ENCODE measurements at regions of chr2 and their contacts with region 1.

Region 1: GRCh38 chr2:149587220-149587949 is at the start of gene MMADHC:
- DNase-seq: peak; percentile 97
- ATAC-seq: peak; percentile 96
- H3K4me3 ChIP-seq: peak within 1 kb of the TSS; percentile 83 to 88 (median 83)
- H3K27ac ChIP-seq: peak within 1 kb of the TSS; percentile 97
- H3K4me1 ChIP-seq: peaks cover 47% of the 10 kb centered on the region
- H3K27me3 ChIP-seq: no peaks in the 10 kb centered on the region; a peak in 1 of 5 replicates
- CTCF ChIP-seq: no peak
- EP300 ChIP-seq: peak; percentile 19 to 37; a peak in 1 of 4 replicates
- POLR2A ChIP-seq: peak; percentile 88 to 95
- RAD21 ChIP-seq: peak; percentile 28; the same call in 1 of the 2 replicates
- total RNA-seq, gene MMADHC: 210 and 304 TPM in 2 replicates

Region 2: DNA sequence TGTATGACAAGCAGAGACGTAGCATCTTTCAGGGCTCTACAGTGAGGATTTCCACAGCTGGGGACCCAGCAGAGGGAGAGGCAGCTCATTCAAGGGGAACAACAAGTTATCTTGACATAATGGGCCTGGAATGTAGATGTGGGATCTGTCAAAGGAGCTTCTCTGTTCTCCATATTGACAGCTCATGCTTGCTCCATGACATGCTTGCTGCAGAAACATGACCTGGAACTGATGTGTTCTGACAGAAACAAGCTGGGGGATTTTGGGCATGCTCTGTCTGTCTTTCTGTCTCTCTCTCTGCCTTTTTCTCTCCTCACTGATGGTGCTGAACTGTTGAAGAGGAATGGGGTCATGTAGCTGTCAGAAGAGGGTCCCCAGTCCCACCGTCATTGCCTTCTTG is 79.4 kb before region 1 on chr2:
- CTCF ChIA-PET with region 1: no interaction called
- POLR2A ChIA-PET with region 1: no interaction called
- in situ Hi-C with region 1: no loop called
- intact Hi-C with region 1: no loop called
- DNase-seq: no peak
- ATAC-seq: no peak
- H3K4me3 ChIP-seq: no peak overlapping the region
- H3K27ac ChIP-seq: no peak overlapping the region
- H3K4me1 ChIP-seq: no peaks in the 10 kb centered on the region
- H3K27me3 ChIP-seq: no peaks in the 10 kb centered on the region
- CTCF ChIP-seq: no peak
- EP300 ChIP-seq: no peak
- POLR2A ChIP-seq: no peak
- RAD21 ChIP-seq: no peak

Region 3: GRCh38 chr2:149573760-149574159 is 13.6 kb before region 1 on chr2:
- CTCF ChIA-PET with region 1: no interaction called
- POLR2A ChIA-PET with region 1: interaction called, 13 read pairs
- in situ Hi-C with region 1: no loop called
- intact Hi-C with region 1: no loop called
- DNase-seq: no peak
- ATAC-seq: no peak
- H3K4me3 ChIP-seq: no peak overlapping the region
- H3K27ac ChIP-seq: no peak overlapping the region
- H3K4me1 ChIP-seq: no peaks in the 10 kb centered on the region
- H3K27me3 ChIP-seq: no peaks in the 10 kb centered on the region
- CTCF ChIP-seq: no peak
- EP300 ChIP-seq: no peak
- POLR2A ChIP-seq: no peak
- RAD21 ChIP-seq: no peak

Region 4: DNA sequence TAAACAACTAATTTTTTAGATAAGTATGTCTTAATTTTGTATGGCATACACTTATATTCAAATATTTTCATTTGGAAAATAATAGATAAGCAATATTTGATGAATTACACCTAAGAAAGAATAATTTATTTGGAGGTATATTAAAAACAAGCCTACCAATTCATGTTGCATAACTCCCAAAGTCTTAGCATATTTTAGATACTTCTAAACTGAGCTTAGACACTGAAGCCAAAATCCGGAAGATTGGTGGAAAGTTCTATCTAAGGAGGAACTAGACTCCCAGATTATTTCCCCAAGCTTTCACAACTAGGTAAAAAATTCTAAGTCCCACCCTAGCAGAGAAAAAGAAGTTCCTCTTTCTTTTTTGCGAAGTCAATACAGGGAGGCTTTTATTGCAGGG is 221.2 kb after region 1 on chr2:
- CTCF ChIA-PET with region 1: no interaction called
- POLR2A ChIA-PET with region 1: no interaction called
- in situ Hi-C with region 1: no loop called
- intact Hi-C with region 1: no loop called
- DNase-seq: no peak
- ATAC-seq: no peak
- H3K4me3 ChIP-seq: no peak overlapping the region
- H3K27ac ChIP-seq: no peak overlapping the region
- H3K4me1 ChIP-seq: no peaks in the 10 kb centered on the region
- H3K27me3 ChIP-seq: no peaks in the 10 kb centered on the region
- CTCF ChIP-seq: no peak
- EP300 ChIP-seq: no peak
- POLR2A ChIP-seq: no peak
- RAD21 ChIP-seq: no peak